Caco-2 (cell line): ENCODE measurements at regions of chr11 and their contacts with region 1.

Region 1: GRCh38 chr11:34926101-34926830 is 9.8 kb downstream of the PDHX start:
- DNase-seq: peak in 1 of 2 experiments; percentile 47
- H3K4me3 ChIP-seq: no peak overlapping the region
- H3K4me3 Mint-ChIP-seq: no peak overlapping the region
- H3K27ac Mint-ChIP-seq: no peak overlapping the region
- H3K4me1 ChIP-seq: peaks cover 50% of the 10 kb centered on the region
- H3K4me1 Mint-ChIP-seq: peaks cover 41% of the 10 kb centered on the region
- H3K27me3 ChIP-seq: no peaks in the 10 kb centered on the region
- H3K27me3 Mint-ChIP-seq: no peaks in the 10 kb centered on the region
- CTCF ChIP-seq: peak; percentile 51 to 73

Region 2: DNA sequence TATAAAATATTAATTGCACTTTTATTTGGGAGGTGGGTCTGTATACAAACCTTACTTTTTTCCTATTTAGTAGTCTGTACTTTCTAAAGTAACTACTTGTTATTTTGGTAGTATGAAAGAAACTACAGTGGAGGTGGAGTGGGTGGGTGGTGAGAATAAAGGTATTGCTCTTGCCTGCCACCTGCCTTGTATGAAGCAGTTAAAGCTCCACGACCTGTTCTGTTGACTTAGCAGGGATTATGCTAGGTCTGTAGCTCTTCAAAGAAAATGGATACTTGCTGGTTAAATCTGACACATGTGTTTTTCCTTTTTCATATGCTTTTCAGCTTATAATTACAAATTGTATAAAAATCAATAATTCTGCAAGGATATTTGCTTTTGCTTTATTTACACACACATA is 193.4 kb before region 1 on chr11:
- CTCF ChIA-PET with region 1: no interaction called
- POLR2A ChIA-PET with region 1: no interaction called
- intact Hi-C with region 1: no loop called
- DNase-seq: peak in 1 of 2 experiments; percentile 5
- H3K4me3 ChIP-seq: no peak overlapping the region
- H3K4me3 Mint-ChIP-seq: no peak overlapping the region
- H3K27ac Mint-ChIP-seq: no peak overlapping the region
- H3K4me1 ChIP-seq: no peaks in the 10 kb centered on the region
- H3K4me1 Mint-ChIP-seq: peaks cover 6% of the 10 kb centered on the region
- H3K27me3 ChIP-seq: no peaks in the 10 kb centered on the region
- H3K27me3 Mint-ChIP-seq: no peaks in the 10 kb centered on the region
- CTCF ChIP-seq: peak in 1 of 2 experiments; percentile 18

Region 3: GRCh38 chr11:34916015-34916842 is 10.0 kb before region 1 on chr11 and contains the starts of genes APIP and PDHX:
- CTCF ChIA-PET with region 1: no interaction called
- POLR2A ChIA-PET with region 1: interaction called, 4 read pairs
- intact Hi-C with region 1: loop called (anchors 1 kb)
- DNase-seq: peak; percentile 99
- H3K4me3 ChIP-seq: peak within 1 kb of the TSS; percentile 95
- H3K4me3 Mint-ChIP-seq: peak within 1 kb of the TSS; percentile 100
- H3K27ac Mint-ChIP-seq: peak within 1 kb of the TSS; percentile 100
- H3K4me1 ChIP-seq: peaks cover 7% of the 10 kb centered on the region; the same call in 1 of the 2 replicates
- H3K4me1 Mint-ChIP-seq: peaks cover 12% of the 10 kb centered on the region
- H3K27me3 ChIP-seq: no peaks in the 10 kb centered on the region
- H3K27me3 Mint-ChIP-seq: no peaks in the 10 kb centered on the region
- CTCF ChIP-seq: no peak
- total RNA-seq, gene APIP: 19.8 and 21.1 TPM in 2 replicates
- total RNA-seq, gene PDHX: 78.5 and 85.4 TPM in 2 replicates

Region 4: DNA sequence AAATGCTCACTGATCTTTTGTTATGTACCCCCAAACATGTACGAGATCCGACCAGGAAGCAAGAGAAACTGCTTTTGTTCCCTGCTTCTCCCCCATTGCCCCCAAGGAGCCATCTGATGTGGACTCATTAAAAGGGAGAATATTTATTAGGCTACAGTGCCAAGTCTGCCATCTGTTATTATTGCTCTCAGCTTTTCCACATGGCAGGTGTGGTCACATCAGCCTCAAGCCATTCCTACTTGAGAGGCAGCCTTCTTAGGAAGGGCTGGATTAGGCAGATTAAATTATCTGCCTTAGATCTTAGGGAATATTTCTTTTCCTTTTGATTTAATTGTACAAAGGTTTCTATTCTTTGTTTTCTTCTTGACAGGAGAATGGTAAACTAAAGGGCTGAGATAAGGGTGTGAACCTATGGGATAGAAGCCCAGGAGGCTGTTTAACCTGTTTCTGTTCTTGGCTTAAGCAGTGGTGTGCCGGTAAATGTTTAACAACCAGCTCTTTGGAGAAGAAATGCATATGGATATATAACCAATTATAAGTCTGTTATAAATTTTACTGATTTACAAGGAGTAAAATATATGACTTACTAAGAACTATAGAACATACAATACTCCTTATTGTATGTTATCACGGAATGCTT is 79.0 kb after region 1 on chr11:
- CTCF ChIA-PET with region 1: no interaction called
- POLR2A ChIA-PET with region 1: interaction called, 5 read pairs
- intact Hi-C with region 1: loop called (anchors 2 kb)
- DNase-seq: peak; percentile 42 to 64
- H3K4me3 ChIP-seq: no peak overlapping the region
- H3K4me3 Mint-ChIP-seq: no peak overlapping the region
- H3K27ac Mint-ChIP-seq: no peak overlapping the region
- H3K4me1 ChIP-seq: peaks cover 33% of the 10 kb centered on the region
- H3K4me1 Mint-ChIP-seq: peaks cover 19% of the 10 kb centered on the region
- H3K27me3 ChIP-seq: no peaks in the 10 kb centered on the region
- H3K27me3 Mint-ChIP-seq: no peaks in the 10 kb centered on the region
- CTCF ChIP-seq: no peak

Region 5: GRCh38 chr11:35173011-35173511 is 246.8 kb after region 1 on chr11:
- CTCF ChIA-PET with region 1: interaction called, 3 read pairs
- POLR2A ChIA-PET with region 1: no interaction called
- intact Hi-C with region 1: loop called (anchors 1 kb)
- DNase-seq: peak; percentile 91 to 93
- H3K4me3 ChIP-seq: no peak overlapping the region
- H3K4me3 Mint-ChIP-seq: no peak overlapping the region
- H3K27ac Mint-ChIP-seq: peak overlapping the region; percentile 59
- H3K4me1 ChIP-seq: peaks cover 46% of the 10 kb centered on the region
- H3K4me1 Mint-ChIP-seq: peaks cover 16% of the 10 kb centered on the region
- H3K27me3 ChIP-seq: no peaks in the 10 kb centered on the region
- H3K27me3 Mint-ChIP-seq: no peaks in the 10 kb centered on the region
- CTCF ChIP-seq: no peak

Region 6: GRCh38 chr11:35305670-35306382 is 379.6 kb after region 1 on chr11:
- CTCF ChIA-PET with region 1: interaction called, 6 read pairs
- POLR2A ChIA-PET with region 1: no interaction called
- intact Hi-C with region 1: loop called (anchors 1 kb)
- DNase-seq: peak; percentile 53 to 62
- H3K4me3 ChIP-seq: no peak overlapping the region
- H3K4me3 Mint-ChIP-seq: no peak overlapping the region
- H3K27ac Mint-ChIP-seq: peak overlapping the region; percentile 56
- H3K4me1 ChIP-seq: no peaks in the 10 kb centered on the region
- H3K4me1 Mint-ChIP-seq: peaks cover 7% of the 10 kb centered on the region
- H3K27me3 ChIP-seq: no peaks in the 10 kb centered on the region
- H3K27me3 Mint-ChIP-seq: peaks cover 2% of the 10 kb centered on the region
- CTCF ChIP-seq: peak; percentile 68 to 85

Region 7: DNA sequence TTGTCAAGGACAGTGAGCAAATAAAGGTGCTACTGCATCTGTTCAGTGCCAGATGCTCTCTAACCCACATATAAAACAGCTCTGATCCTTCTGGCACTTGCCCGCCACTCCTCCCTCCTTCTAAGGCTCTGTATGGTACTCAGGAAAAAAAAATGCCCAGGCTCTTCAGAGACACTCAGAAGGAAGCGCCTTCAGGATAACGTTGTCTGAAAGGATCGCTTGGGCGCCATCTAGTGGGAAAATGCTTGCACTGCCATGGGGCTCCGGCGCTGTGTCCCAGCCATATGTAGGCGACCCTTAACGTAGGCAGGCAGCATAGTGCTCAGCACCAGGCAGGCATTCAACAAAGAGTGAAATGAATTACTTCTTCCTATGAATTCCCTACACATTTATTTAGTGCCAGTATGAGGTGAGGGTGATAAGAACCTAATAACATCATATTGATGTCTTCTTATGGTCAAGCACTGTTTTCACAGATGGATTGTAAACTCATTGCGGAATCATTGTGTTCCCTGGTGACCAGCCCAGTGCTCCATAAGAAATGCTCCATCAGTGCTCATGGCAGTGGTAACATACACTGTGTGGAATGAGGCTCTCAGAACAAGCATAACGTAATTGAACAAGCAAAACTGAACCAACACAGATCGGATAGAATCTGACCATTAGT is 559.5 kb after region 1 on chr11:
- CTCF ChIA-PET with region 1: no interaction called
- POLR2A ChIA-PET with region 1: no interaction called
- intact Hi-C with region 1: loop called (anchors 5 kb)
- DNase-seq: peak; percentile 80 to 86
- H3K4me3 ChIP-seq: no peak overlapping the region
- H3K4me3 Mint-ChIP-seq: no peak overlapping the region
- H3K27ac Mint-ChIP-seq: no peak overlapping the region
- H3K4me1 ChIP-seq: no peaks in the 10 kb centered on the region
- H3K4me1 Mint-ChIP-seq: no peaks in the 10 kb centered on the region
- H3K27me3 ChIP-seq: no peaks in the 10 kb centered on the region
- H3K27me3 Mint-ChIP-seq: no peaks in the 10 kb centered on the region
- CTCF ChIP-seq: peak; percentile 87 to 96